ENCODE measurements at regions of chr15 and their contacts with region 1.

Region 1: GRCh38 chr15:64693134-64693533 is 82.3 kb downstream of the RBPMS2 start:
- DNase-seq: no peak
- ATAC-seq: no peak
- H3K4me3 ChIP-seq: no peak overlapping the region
- H3K4me3 Mint-ChIP-seq: no peak overlapping the region
- H3K27ac ChIP-seq: peak overlapping the region in 1 of 2 donors; percentile 90
- H3K27ac Mint-ChIP-seq: peak overlapping the region; percentile 50
- H3K4me1 ChIP-seq: peaks cover 32 to 40% of the 10 kb centered on the region in 2 donors
- H3K4me1 Mint-ChIP-seq: peaks cover 41% of the 10 kb centered on the region
- H3K27me3 ChIP-seq: no peaks in the 10 kb centered on the region
- H3K27me3 Mint-ChIP-seq: no peaks in the 10 kb centered on the region
- CTCF ChIP-seq: no peak

Region 2: GRCh38 chr15:64536244-64536836 is 156.8 kb before region 1 on chr15:
- CTCF ChIA-PET with region 1: no interaction called
- POLR2A ChIA-PET with region 1: no interaction called
- intact Hi-C with region 1: no loop called
- DNase-seq: no peak
- ATAC-seq: no peak
- H3K4me3 ChIP-seq: no peak overlapping the region
- H3K4me3 Mint-ChIP-seq: no peak overlapping the region
- H3K27ac ChIP-seq: no peak overlapping the region
- H3K27ac Mint-ChIP-seq: no peak overlapping the region
- H3K4me1 ChIP-seq: peaks cover 4 to 6% of the 10 kb centered on the region in 2 donors
- H3K4me1 Mint-ChIP-seq: peaks cover 23% of the 10 kb centered on the region
- H3K27me3 ChIP-seq: no peaks in the 10 kb centered on the region
- H3K27me3 Mint-ChIP-seq: no peaks in the 10 kb centered on the region
- CTCF ChIP-seq: no peak

Region 3: GRCh38 chr15:64614519-64614918 is 78.6 kb before region 1 on chr15:
- CTCF ChIA-PET with region 1: no interaction called
- POLR2A ChIA-PET with region 1: interaction called, 10 read pairs
- intact Hi-C with region 1: no loop called
- DNase-seq: no peak
- ATAC-seq: no peak
- H3K4me3 ChIP-seq: no peak overlapping the region
- H3K4me3 Mint-ChIP-seq: no peak overlapping the region
- H3K27ac ChIP-seq: no peak overlapping the region
- H3K27ac Mint-ChIP-seq: no peak overlapping the region
- H3K4me1 ChIP-seq: no peaks in the 10 kb centered on the region
- H3K4me1 Mint-ChIP-seq: peaks cover 14% of the 10 kb centered on the region
- H3K27me3 ChIP-seq: no peaks in the 10 kb centered on the region
- H3K27me3 Mint-ChIP-seq: no peaks in the 10 kb centered on the region
- CTCF ChIP-seq: no peak

Measured in B cell (primary cell).